CD8-positive, alpha-beta memory T cell (primary cell): ENCODE measurements at regions of chr6 and their contacts with region 1.

Region 1: GRCh38 chr6:30678964-30679726 is 6.3 kb upstream of the DHX16 start:
- DNase-seq: peak; percentile 86 to 93 (median 90)
- H3K4me3 ChIP-seq: peak overlapping the region; percentile 92
- H3K4me3 Mint-ChIP-seq: peak overlapping the region; percentile 95 to 100 (median 99)
- H3K27ac ChIP-seq: peak overlapping the region; percentile 53
- H3K27ac Mint-ChIP-seq: peak overlapping the region; percentile 80 to 100 (median 99)
- H3K4me1 ChIP-seq: peaks cover 38% of the 10 kb centered on the region
- H3K4me1 Mint-ChIP-seq: peaks cover 42 to 51% (median 44%) of the 10 kb centered on the region in 3 donors
- H3K27me3 ChIP-seq: no peaks in the 10 kb centered on the region
- H3K27me3 Mint-ChIP-seq: no peaks in the 10 kb centered on the region

Region 2: DNA sequence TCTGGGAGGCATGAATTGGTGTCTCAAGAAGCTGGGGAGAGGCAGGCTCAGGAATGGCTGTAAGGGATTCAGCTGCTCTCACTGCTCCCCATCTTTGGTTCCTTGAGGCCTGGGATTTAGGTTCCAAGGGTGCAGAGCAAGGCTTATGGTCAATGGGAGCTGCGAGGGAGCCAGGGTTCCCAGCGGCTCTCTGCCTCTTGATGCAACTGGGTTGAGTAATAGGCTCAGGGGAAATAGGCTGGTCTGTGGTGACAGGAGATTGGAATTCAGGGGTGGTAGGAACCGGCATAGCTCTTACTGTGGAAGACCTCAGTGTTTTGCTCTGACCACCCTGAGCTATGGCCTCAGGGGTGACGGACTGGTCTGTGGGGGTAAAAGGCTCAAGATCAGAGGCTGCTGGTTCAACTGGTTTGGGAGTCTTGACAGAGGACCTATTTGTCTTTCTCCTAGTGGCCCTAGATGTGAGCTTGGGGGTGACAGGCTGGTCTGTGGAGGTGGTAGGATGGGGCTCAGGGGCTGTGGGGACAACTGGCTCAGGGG is 24.7 kb after region 1 on chr6:
- CTCF ChIA-PET with region 1: interaction called, 21 read pairs
- POLR2A ChIA-PET with region 1: interaction called, 3 read pairs
- DNase-seq: no peak
- H3K4me3 ChIP-seq: no peak overlapping the region
- H3K4me3 Mint-ChIP-seq: peak overlapping the region in 1 of 7 donors; percentile 28
- H3K27ac ChIP-seq: no peak overlapping the region
- H3K27ac Mint-ChIP-seq: peak overlapping the region in 2 of 8 donors; percentile 11 to 69
- H3K4me1 ChIP-seq: no peaks in the 10 kb centered on the region
- H3K4me1 Mint-ChIP-seq: no peaks in the 10 kb centered on the region
- H3K27me3 ChIP-seq: no peaks in the 10 kb centered on the region
- H3K27me3 Mint-ChIP-seq: no peaks in the 10 kb centered on the region

Region 3: DNA sequence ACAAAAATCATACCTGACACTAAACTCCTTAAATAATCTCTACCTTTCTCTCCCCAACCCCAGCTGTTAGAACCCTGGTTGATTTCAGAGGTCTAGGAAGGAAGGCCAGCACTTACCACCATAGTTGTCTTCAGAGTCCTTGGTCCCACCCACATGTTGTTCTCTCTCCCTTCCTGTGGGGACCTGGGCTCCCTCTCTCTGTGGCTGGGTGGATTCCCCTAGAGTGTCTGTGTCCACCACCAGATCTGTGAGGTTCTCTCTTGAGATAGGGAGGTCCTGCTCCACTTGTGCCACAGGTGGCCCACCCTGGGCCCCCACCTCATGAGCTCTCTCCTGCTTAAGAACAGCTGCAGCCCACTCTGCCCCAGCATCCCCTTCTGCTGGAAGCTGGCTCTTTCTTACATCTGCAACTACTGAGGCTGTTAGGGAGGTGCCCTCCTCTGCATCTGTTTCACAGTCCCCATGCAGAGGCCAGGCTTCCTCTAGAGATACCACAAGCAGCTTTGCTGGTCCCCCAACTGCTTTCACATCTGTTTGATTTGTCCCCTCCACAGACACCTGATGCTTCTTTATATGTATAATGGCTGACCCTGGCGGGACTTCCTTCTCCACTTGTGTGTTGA is 32.7 kb after region 1 on chr6:
- CTCF ChIA-PET with region 1: interaction called, 697 read pairs
- POLR2A ChIA-PET with region 1: interaction called, 19 read pairs
- DNase-seq: no peak
- H3K4me3 ChIP-seq: no peak overlapping the region
- H3K4me3 Mint-ChIP-seq: peak overlapping the region in 2 of 7 donors; percentile 2 to 68
- H3K27ac ChIP-seq: no peak overlapping the region
- H3K27ac Mint-ChIP-seq: peak overlapping the region in 7 of 8 donors; percentile 10 to 77 (median 60)
- H3K4me1 ChIP-seq: peaks cover 12% of the 10 kb centered on the region
- H3K4me1 Mint-ChIP-seq: peaks cover 27 to 43% (median 34%) of the 10 kb centered on the region in 3 donors
- H3K27me3 ChIP-seq: no peaks in the 10 kb centered on the region
- H3K27me3 Mint-ChIP-seq: no peaks in the 10 kb centered on the region

Region 4: GRCh38 chr6:30717042-30717844 is 38.1 kb after region 1 on chr6 and contains the start of gene MDC1:
- CTCF ChIA-PET with region 1: interaction called, 697 read pairs
- POLR2A ChIA-PET with region 1: interaction called, 142 read pairs
- DNase-seq: peak; percentile 97 to 100 (median 99)
- H3K4me3 ChIP-seq: peak within 1 kb of the TSS; percentile 85
- H3K4me3 Mint-ChIP-seq: peak within 1 kb of the TSS; percentile 90 to 98 (median 94)
- H3K27ac ChIP-seq: peak within 1 kb of the TSS; percentile 92
- H3K27ac Mint-ChIP-seq: peak within 1 kb of the TSS; percentile 92 to 100 (median 99)
- H3K4me1 ChIP-seq: peaks cover 20% of the 10 kb centered on the region
- H3K4me1 Mint-ChIP-seq: peaks cover 45 to 64% (median 46%) of the 10 kb centered on the region in 3 donors
- H3K27me3 ChIP-seq: no peaks in the 10 kb centered on the region
- H3K27me3 Mint-ChIP-seq: peaks cover 0 to 2% of the 10 kb centered on the region in 2 donors
- total RNA-seq, gene MDC1: 59.4 to 71.1 TPM

Region 5: GRCh38 chr6:30747300-30747687 is 68.1 kb after region 1 on chr6:
- CTCF ChIA-PET with region 1: interaction called, 10 read pairs
- POLR2A ChIA-PET with region 1: no interaction called
- DNase-seq: no peak
- H3K4me3 ChIP-seq: no peak overlapping the region
- H3K4me3 Mint-ChIP-seq: peak overlapping the region in 1 of 7 donors; percentile 66
- H3K27ac ChIP-seq: no peak overlapping the region
- H3K27ac Mint-ChIP-seq: peak overlapping the region in 1 of 8 donors; percentile 8
- H3K4me1 ChIP-seq: peaks cover 5% of the 10 kb centered on the region
- H3K4me1 Mint-ChIP-seq: peaks cover 13 to 20% (median 14%) of the 10 kb centered on the region in 3 donors
- H3K27me3 ChIP-seq: no peaks in the 10 kb centered on the region
- H3K27me3 Mint-ChIP-seq: no peaks in the 10 kb centered on the region

Region 6: DNA sequence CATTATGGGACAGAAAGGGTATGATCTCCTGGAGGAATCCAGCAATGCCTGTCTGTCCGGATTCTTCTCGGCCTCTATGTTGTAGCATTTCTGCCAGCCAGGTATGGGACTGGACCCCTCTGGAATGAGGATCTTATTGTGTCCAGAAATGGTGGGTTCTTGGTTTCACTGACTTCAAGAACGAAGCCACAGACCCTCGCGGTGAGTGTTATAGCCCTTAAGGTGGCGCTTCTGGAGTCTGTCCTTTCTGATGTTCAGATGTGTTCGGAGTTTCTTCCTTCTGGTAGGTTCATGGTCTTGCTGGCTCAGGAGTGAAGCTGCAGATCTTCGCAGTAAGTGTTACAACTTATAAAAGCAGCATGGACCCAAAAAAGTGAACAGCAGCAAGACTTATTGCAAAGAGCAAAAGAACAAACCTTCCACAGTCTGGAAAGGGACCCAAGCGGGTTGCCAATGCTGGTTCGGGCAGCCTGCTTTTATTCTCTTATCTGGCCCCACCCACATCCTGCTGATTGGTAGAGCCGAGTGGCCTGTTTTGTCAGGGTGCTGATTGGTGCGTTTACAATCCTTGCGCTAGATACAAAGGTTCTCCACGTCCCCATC is 127.5 kb after region 1 on chr6:
- CTCF ChIA-PET with region 1: no interaction called
- POLR2A ChIA-PET with region 1: no interaction called
- DNase-seq: no peak
- H3K4me3 ChIP-seq: no peak overlapping the region
- H3K4me3 Mint-ChIP-seq: no peak overlapping the region
- H3K27ac ChIP-seq: no peak overlapping the region
- H3K27ac Mint-ChIP-seq: no peak overlapping the region
- H3K4me1 ChIP-seq: peaks cover 20% of the 10 kb centered on the region
- H3K4me1 Mint-ChIP-seq: peaks cover 24 to 66% (median 33%) of the 10 kb centered on the region in 3 donors
- H3K27me3 ChIP-seq: no peaks in the 10 kb centered on the region
- H3K27me3 Mint-ChIP-seq: no peaks in the 10 kb centered on the region